Body of pancreas (tissue), 4 donors: ENCODE measurements at regions of chr1 and their contacts with region 1.

Region 1: DNA sequence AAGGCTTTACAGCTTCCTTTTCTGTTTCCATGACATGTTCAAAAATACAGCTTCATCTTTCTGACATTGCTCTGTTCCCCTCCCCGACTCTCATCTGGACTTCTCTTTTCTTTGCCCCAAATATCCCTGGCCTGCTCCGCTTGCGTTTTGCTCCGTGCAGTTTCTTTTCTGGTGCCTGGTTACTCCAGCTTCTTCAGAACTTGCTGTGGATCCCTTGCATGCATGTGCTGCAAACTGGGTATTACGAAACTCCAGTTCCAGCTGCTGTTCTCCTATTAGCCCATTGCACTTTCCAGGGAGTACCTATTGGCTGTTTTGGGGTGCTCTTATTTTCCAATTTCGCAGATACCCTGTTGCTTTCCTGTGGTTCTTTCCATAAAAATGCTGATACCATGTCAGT is 9.9 kb upstream of the NDC1 start:
- DNase-seq: no peak
- ATAC-seq: no peak
- H3K4me3 ChIP-seq: no peak overlapping the region
- H3K27ac ChIP-seq: no peak overlapping the region
- H3K4me1 ChIP-seq: no peaks in the 10 kb centered on the region
- H3K27me3 ChIP-seq: no peaks in the 10 kb centered on the region
- CTCF ChIP-seq: no peak
- POLR2A ChIP-seq: no peak

Region 2: GRCh38 chr1:54052934-54053744 is 205.2 kb after region 1 on chr1 and contains the starts of genes TCEANC2 and TMEM59:
- intact Hi-C with region 1: loop called (anchors 10 kb)
- DNase-seq: peak; percentile 97 to 99 (median 97)
- ATAC-seq: peak; percentile 95
- H3K4me3 ChIP-seq: peak within 1 kb of the TSS; percentile 70 to 82
- H3K27ac ChIP-seq: peak within 1 kb of the TSS; percentile 82 to 96 (median 92)
- H3K4me1 ChIP-seq: peaks cover 45% of the 10 kb centered on the region
- H3K27me3 ChIP-seq: no peaks in the 10 kb centered on the region
- CTCF ChIP-seq: peak in 3 of 7 experiments; percentile 24 to 31 (median 25)
- POLR2A ChIP-seq: peak; percentile 62 to 90 (median 87)
- total RNA-seq, gene TCEANC2: 1.3 to 2.9 TPM
- total RNA-seq, gene TMEM59: 89.5 to 131 TPM

Region 3: GRCh38 chr1:54583871-54584270 is 735.9 kb after region 1 on chr1:
- intact Hi-C with region 1: no loop called
- DNase-seq: no peak
- ATAC-seq: no peak
- H3K4me3 ChIP-seq: no peak overlapping the region
- H3K27ac ChIP-seq: no peak overlapping the region
- H3K4me1 ChIP-seq: peaks cover 23% of the 10 kb centered on the region
- H3K27me3 ChIP-seq: no peaks in the 10 kb centered on the region
- CTCF ChIP-seq: no peak
- POLR2A ChIP-seq: no peak